ENCODE measurements at regions of chr2 and their contacts with region 1.

Region 1: DNA sequence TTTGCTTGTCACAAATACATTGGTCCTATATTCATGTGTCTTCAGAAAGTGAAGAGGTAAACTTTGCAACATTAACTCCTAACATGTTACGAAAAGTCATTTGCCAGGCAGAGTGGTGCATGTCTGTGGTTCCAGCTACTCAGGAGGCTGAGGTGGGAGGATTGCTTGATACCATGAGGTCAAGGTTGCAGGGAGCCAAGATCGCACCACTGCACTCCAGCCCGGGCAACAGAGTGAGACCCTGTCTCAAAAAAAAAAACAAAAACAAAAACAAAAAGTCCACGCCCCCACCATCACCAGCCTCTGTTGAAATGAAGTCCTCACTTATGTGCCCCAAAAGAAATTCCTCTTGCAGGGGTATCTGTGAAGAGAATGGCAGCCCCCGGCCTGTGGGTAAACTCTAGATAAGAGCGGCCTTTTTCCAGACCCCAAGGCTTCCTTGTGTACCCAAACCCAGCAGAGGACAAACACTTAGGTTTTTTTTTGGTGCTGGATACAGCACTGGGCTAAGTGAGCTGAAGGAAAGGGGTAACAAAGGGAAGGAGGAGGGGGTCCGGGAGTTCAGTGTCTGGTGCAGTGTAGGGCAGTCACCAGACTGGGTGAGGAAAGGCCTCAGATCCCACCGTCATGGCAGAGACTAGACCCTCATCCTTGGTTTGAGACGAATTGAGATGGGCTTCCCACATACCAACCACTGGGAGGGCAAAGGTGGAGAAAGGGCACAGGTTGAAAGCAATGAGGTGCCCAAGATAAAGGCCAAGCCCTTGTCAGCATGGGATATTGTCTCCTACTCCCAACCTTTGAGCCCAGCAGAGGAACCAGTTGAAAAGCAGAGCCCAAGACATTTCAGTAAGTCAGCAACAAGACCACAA is 19.2 kb downstream of the HSPD1 start:
- DNase-seq: no peak
- ATAC-seq: no peak
- H3K4me3 ChIP-seq: no peak overlapping the region
- H3K27ac ChIP-seq: no peak overlapping the region
- H3K4me1 ChIP-seq: peaks cover 4 to 20% of the 10 kb centered on the region in 2 experiments; a peak in 3 of 5 replicates
- H3K27me3 ChIP-seq: no peaks in the 10 kb centered on the region
- CTCF ChIP-seq: no peak
- EP300 ChIP-seq: no peak
- POLR2A ChIP-seq: no peak
- RAD21 ChIP-seq: no peak

Region 2: DNA sequence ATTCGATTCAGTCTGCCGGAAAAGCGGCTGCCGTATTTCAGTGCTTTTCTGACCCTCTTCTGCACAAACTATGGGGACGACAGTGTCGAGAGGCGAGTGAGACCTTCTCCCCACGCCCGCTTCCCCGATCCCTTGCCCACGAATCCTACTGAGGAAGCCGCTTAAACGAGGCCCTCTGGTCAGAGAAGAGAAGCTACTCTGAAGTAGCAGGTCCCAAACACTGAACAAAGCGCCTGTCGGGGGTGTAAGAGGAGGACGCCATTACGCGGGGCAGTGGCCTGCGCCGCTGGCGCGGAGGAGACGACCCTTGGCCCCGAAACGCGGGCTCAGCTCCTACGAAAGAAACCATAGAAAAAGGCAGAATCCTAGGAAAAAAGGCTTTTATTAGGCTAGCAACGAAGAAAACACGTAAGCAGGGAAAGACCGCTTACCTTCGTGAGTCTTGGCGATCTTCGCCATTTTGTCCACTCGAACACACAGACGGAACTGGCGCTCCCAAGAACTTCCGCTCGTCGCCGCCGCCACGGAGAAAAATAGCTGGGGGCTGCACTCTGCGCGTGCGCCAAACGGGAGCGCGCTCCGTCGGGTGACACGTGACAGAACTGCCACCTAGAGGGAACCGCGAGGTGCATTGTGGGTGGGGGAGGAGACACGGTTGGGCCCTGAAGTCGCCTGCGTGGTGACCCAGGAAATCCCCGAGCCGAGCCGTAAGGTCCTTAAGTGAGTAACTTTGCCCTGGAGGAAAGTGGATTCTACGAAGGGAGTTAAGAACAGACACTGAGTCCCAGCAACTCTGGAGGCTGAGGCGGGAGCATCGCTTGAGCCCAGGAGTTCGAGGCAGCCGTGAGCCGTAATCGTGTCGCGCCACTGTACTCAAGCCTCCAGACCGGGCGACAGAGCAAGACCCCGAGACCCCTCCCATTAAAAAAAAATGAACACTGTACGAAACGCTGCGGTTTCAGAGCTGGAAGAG is 45.6 kb before region 1 on chr2 and contains the start of gene SF3B1:
- CTCF ChIA-PET with region 1: no interaction called
- POLR2A ChIA-PET with region 1: no interaction called
- in situ Hi-C with region 1: no loop called
- intact Hi-C with region 1: loop called (anchors 1 kb)
- DNase-seq: peak; percentile 88 to 97 (median 90)
- ATAC-seq: peak; percentile 89
- H3K4me3 ChIP-seq: peak within 1 kb of the TSS; percentile 77
- H3K27ac ChIP-seq: peak within 1 kb of the TSS; percentile 98
- H3K4me1 ChIP-seq: peaks cover 14 to 17% of the 10 kb centered on the region in 2 experiments; a peak in 4 of 5 replicates
- H3K27me3 ChIP-seq: no peaks in the 10 kb centered on the region
- CTCF ChIP-seq: no peak
- EP300 ChIP-seq: 0 out of 2 replicates have a peak, but pooled peaks have one; percentile 7
- POLR2A ChIP-seq: peak; percentile 89
- RAD21 ChIP-seq: no peak
- polyA plus RNA-seq, gene SF3B1: 125 to 177 TPM

Measured in K562 (cell line).